ENCODE measurements at regions of chrX and their contacts with region 1.

Region 1: DNA sequence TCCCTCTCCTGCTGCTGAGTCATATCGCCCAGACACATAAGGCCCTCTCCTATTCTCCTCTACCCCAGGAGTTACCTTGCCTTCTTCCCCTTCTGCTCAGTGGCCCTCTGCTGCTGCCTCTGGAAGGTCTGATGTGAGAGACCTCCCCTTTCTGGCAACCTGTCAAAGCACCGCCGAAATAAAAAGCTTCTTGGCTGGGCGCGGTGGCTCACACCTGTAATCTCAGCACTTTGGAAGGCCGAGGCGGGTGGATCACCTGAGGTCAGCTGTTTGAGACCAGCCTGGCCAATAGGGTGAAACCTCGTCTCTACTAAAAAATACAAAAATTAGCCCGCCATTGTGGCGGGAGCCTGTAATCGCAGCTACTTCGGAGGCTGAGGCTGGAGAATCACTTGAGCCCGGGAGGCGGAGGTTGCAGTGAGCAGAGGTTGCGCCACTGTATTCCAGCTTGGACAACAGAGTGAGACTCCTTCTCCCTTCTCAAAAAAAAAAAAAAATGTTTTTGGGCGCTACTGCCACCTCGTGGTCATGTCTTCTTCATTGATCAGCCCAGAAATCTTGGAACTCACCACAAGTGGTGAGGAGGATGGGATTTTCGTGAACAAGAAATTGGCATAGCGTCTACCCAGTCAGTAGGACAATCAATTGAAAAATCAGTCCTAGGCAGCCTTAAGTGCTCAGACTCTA is 8.6 kb upstream of the ZXDA start:
- DNase-seq: peak; percentile 27
- H3K4me3 ChIP-seq: no peak overlapping the region
- H3K27ac ChIP-seq: no peak overlapping the region
- H3K4me1 ChIP-seq: no peaks in the 10 kb centered on the region
- H3K27me3 ChIP-seq: no peaks in the 10 kb centered on the region
- CTCF ChIP-seq: peak; percentile 28 to 53 (median 40)
- EP300 ChIP-seq: no peak
- POLR2A ChIP-seq: no peak

Region 2: DNA sequence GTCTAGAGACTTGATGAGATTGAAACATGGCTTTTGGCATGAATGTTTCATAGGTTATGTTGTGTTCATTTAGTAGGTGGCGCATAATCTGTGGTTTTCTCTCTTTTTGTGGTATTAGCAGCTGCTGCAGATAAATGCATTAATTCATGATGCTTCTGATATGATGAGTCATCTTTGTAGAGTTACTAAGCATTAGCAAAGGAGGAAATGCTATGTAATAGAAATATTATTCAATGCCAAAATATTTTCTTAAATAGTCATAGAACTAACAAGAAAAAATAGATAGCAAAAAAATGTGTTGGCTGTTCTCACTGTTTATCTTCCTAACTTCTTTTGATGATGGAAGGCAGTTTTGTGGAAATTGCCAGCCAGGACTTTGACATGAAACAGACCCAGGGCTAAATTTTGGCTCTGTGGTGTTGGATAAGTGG is 323.5 kb before region 1 on chrX:
- in situ Hi-C with region 1: loop called (anchors 25 kb)
- intact Hi-C with region 1: no loop called
- DNase-seq: no peak
- H3K4me3 ChIP-seq: peak overlapping the region in 1 of 4 donors; percentile 2
- H3K27ac ChIP-seq: peak overlapping the region in 2 of 4 donors; percentile 20 to 49
- H3K4me1 ChIP-seq: peaks cover 0 to 29% (median 7%) of the 10 kb centered on the region in 4 donors
- H3K27me3 ChIP-seq: no peaks in the 10 kb centered on the region
- CTCF ChIP-seq: no peak
- EP300 ChIP-seq: no peak
- POLR2A ChIP-seq: no peak

Measured in transverse colon (tissue), 4 donors.